ENCODE measurements at regions of chr5 and their contacts with region 1.

Region 1: DNA sequence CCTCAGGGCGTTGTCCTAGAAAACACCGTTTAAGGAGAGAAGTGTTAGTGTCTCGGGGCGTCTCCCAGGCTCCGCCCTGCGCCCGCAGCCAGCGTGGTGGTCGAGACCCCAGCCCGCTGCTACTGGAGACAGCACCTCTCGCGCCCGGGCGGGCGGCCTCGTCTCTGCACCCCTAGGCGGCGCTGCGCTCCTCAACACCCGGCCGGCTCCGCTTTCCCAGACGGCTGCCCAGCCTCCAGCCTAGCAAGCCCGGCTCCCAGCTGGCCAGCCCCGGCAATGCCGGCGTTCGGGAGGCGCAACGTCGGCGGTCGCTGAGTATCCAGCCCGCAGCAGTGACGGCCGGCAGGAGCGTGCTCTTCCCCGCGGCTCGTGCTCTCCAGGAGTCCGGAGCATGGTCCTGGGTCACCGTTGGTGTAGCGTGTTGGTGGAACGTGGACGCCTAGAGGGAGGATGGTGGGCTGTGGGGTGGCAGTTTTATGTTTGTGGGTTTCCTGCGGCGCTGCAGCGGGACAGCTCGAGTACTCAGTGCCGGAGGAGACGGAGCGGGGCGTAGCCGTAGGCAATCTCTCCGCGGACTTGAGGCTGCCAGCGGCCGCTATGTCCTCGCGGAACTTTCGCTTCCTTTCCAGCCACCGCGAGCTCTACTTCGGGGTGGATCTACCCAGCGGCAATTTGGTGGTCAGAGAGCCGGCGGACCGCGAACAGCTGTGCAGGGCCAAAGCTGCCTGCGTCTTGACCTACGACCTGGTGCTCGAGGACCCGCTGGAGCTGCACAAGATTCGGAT is 536 bp downstream of the PCDHAC1 start:
- DNase-seq: peak; percentile 95
- H3K4me3 ChIP-seq: peak overlapping the region; percentile 73
- H3K27ac ChIP-seq: peak overlapping the region; percentile 47
- H3K4me1 ChIP-seq: peaks cover 6% of the 10 kb centered on the region
- H3K27me3 ChIP-seq: no peaks in the 10 kb centered on the region
- CTCF ChIP-seq: peak; percentile 98

Region 2: DNA sequence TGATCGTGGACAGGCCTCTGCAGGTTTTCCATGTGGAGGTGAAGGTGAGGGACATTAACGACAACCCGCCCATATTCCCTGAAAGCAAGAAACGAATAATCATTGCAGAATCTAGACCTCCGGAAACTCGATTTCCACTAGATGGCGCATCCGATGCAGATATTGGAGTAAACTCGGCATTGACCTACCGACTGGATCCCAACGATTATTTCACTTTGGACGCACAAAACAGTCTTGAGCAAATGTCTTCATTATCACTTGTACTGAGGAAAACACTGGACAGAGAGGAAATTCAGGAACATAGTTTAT is 44.1 kb before region 1 on chr5:
- CTCF ChIA-PET with region 1: interaction called, 3 read pairs
- POLR2A ChIA-PET with region 1: interaction called, 7 read pairs
- intact Hi-C with region 1: loop called (anchors 5 kb)
- DNase-seq: peak; percentile 89
- H3K4me3 ChIP-seq: peak overlapping the region; percentile 51
- H3K27ac ChIP-seq: peak overlapping the region; percentile 36
- H3K4me1 ChIP-seq: no peaks in the 10 kb centered on the region
- H3K27me3 ChIP-seq: no peaks in the 10 kb centered on the region
- CTCF ChIP-seq: peak; percentile 75

Region 3: DNA sequence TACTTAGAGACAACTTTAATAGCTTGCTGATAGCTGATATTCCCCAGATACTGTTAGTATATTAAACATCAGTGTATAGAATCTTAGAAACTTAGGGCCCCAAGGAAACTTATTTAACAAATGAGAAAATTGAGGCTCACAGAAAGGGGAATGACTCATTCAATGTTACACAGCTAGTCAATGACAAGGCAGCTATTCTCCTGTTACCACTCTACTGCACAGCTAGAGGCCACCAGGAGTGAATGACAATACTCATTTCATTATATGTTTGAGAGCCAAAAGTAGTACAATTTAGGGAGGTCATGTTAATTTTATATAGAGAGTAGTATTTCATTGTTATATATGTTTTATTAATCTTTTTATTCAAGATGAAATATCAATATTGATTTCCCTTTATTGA is 91.3 kb after region 1 on chr5:
- CTCF ChIA-PET with region 1: interaction called, 13 read pairs
- POLR2A ChIA-PET with region 1: no interaction called
- intact Hi-C with region 1: no loop called
- DNase-seq: peak; percentile 54
- H3K4me3 ChIP-seq: no peak overlapping the region
- H3K27ac ChIP-seq: no peak overlapping the region
- H3K4me1 ChIP-seq: peaks cover 4% of the 10 kb centered on the region
- H3K27me3 ChIP-seq: no peaks in the 10 kb centered on the region
- CTCF ChIP-seq: no peak

Measured in A673 (cell line).